Mammary epithelial cell (primary cell): ENCODE measurements at regions of chr10 and their contacts with region 1.

Region 1: DNA sequence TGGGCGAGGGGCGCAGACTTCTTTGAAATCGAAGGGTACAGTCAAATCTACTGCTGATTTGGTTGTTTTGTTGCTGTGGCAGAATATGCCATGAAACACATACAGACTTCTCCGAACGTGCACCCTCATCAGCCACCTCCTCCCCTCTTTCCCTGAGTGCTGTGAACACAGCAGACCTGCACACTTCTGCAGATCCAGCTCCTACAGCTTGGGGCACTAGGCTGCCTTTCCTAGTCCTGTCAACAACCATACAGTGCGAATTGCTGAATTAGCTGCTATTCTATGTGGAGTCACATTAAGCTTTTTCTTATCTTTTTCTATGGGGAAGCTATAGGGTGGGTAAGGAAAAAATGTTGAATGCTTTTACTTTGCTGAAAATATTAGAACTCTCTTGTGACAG is 57.5 kb downstream of the COL17A1 start:
- DNase-seq: peak; percentile 46
- H3K4me3 ChIP-seq: no peak overlapping the region
- H3K27ac ChIP-seq: no peak overlapping the region
- H3K4me1 ChIP-seq: no peaks in the 10 kb centered on the region
- H3K27me3 ChIP-seq: no peaks in the 10 kb centered on the region
- CTCF ChIP-seq: peak; percentile 50 to 52

Region 2: GRCh38 chr10:103894441-103894885 is 133.7 kb before region 1 on chr10:
- CTCF ChIA-PET with region 1: interaction called, 16 read pairs
- dilution Hi-C with region 1: no loop called
- in situ Hi-C with region 1: no loop called
- intact Hi-C with region 1: no loop called
- DNase-seq: peak; percentile 59
- H3K4me3 ChIP-seq: no peak overlapping the region
- H3K27ac ChIP-seq: peak overlapping the region; percentile 75
- H3K4me1 ChIP-seq: peaks cover 53% of the 10 kb centered on the region
- H3K27me3 ChIP-seq: no peaks in the 10 kb centered on the region
- CTCF ChIP-seq: no peak

Region 3: DNA sequence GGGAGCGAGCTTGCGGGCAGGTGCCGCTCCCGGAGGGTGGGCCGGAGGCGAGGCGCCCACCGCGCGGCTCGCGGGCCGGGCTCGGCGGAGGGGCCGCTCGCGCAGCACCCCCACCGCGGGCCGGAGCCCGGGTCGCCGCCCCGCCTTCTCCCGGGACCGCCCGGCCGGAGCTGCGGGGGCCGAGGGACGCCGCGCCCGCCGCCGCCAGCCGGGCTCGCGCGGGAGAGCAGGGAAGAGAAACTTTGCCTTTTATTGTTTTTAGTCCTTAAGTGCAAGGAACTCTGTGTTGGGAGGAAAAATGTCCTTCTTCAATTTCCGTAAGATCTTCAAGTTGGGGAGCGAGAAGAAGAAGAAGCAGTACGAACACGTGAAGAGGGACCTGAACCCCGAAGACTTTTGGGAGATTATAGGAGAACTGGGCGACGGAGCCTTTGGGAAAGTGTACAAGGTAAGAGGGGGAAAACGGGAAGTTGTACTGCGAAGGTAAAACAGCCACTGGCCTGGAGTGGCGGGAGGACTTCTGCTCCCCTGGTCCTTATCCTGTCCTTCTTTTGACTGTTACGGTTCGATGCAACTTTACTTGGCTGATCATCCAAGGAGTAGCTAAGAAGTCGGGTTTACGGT is 60.6 kb before region 1 on chr10:
- CTCF ChIA-PET with region 1: no interaction called
- dilution Hi-C with region 1: no loop called
- in situ Hi-C with region 1: no loop called
- intact Hi-C with region 1: no loop called
- DNase-seq: peak; percentile 42
- H3K4me3 ChIP-seq: peak overlapping the region; percentile 69 to 99 (median 97)
- H3K27ac ChIP-seq: peak overlapping the region; percentile 72
- H3K4me1 ChIP-seq: peaks cover 13% of the 10 kb centered on the region
- H3K27me3 ChIP-seq: no peaks in the 10 kb centered on the region
- CTCF ChIP-seq: peak in 1 of 2 donors; percentile 3

Region 4: GRCh38 chr10:104650072-104650471 is 621.9 kb after region 1 on chr10:
- CTCF ChIA-PET with region 1: no interaction called
- dilution Hi-C with region 1: no loop called
- in situ Hi-C with region 1: no loop called
- intact Hi-C with region 1: no loop called
- DNase-seq: no peak
- H3K4me3 ChIP-seq: no peak overlapping the region
- H3K27ac ChIP-seq: no peak overlapping the region
- H3K4me1 ChIP-seq: no peaks in the 10 kb centered on the region
- H3K27me3 ChIP-seq: no peaks in the 10 kb centered on the region
- CTCF ChIP-seq: peak; percentile 37 to 53